Heart right ventricle (tissue), 16 donors: ENCODE measurements at regions of chr10 and their contacts with region 1.

Region 1: GRCh38 chr10:116287906-116288501 is 15.0 kb upstream of the GFRA1 start:
- DNase-seq: peak in 1 of 2 donors; percentile 37
- ATAC-seq: peak in 4 of 8 donors; percentile 25 to 38 (median 32)
- H3K4me3 ChIP-seq: no peak overlapping the region
- H3K27ac ChIP-seq: no peak overlapping the region
- H3K4me1 ChIP-seq: no peaks in the 10 kb centered on the region
- H3K27me3 ChIP-seq: peaks cover 0 to 17% (median 0%) of the 10 kb centered on the region in 7 donors
- CTCF ChIP-seq: peak; percentile 23 to 77 (median 64)

Region 2: GRCh38 chr10:115171392-115171960 is 1116.5 kb before region 1 on chr10:
- intact Hi-C with region 1: loop called in 1 of 10 experiments (anchors 10 kb)
- DNase-seq: no peak
- ATAC-seq: no peak
- H3K4me3 ChIP-seq: no peak overlapping the region
- H3K27ac ChIP-seq: no peak overlapping the region
- H3K4me1 ChIP-seq: no peaks in the 10 kb centered on the region
- H3K27me3 ChIP-seq: no peaks in the 10 kb centered on the region
- CTCF ChIP-seq: peak in 7 of 9 donors; percentile 16 to 53 (median 43)

Region 3: GRCh38 chr10:115706026-115706781 is 581.8 kb before region 1 on chr10:
- intact Hi-C with region 1: loop called in 8 of 10 experiments (anchors 2 to 10 kb)
- DNase-seq: no peak
- ATAC-seq: no peak
- H3K4me3 ChIP-seq: no peak overlapping the region
- H3K27ac ChIP-seq: no peak overlapping the region
- H3K4me1 ChIP-seq: no peaks in the 10 kb centered on the region
- H3K27me3 ChIP-seq: no peaks in the 10 kb centered on the region
- CTCF ChIP-seq: peak in 8 of 9 donors; percentile 7 to 58 (median 47)

Region 4: DNA sequence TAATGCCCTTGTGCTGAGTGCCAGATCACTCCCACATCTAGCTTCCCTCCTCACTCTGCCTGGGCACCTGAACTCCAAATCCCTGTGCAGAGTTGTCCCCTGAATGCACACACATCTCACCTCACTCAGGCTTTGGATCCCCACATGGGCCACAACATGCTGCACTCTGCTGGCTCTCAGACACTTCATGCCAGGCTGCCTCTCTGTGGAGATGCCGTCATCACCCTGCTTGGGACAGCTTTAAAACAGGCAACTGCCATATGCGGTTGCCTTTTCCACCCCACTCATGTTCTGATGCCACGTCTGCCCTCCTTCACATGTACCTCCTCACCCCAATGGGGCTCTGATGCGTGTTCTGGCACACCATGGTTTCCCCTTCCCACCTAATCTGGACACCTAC is 492.0 kb before region 1 on chr10:
- intact Hi-C with region 1: loop called in 9 of 10 experiments (anchors 2 to 10 kb)
- DNase-seq: no peak
- ATAC-seq: no peak
- H3K4me3 ChIP-seq: no peak overlapping the region
- H3K27ac ChIP-seq: no peak overlapping the region
- H3K4me1 ChIP-seq: no peaks in the 10 kb centered on the region
- H3K27me3 ChIP-seq: no peaks in the 10 kb centered on the region
- CTCF ChIP-seq: no peak

Region 5: DNA sequence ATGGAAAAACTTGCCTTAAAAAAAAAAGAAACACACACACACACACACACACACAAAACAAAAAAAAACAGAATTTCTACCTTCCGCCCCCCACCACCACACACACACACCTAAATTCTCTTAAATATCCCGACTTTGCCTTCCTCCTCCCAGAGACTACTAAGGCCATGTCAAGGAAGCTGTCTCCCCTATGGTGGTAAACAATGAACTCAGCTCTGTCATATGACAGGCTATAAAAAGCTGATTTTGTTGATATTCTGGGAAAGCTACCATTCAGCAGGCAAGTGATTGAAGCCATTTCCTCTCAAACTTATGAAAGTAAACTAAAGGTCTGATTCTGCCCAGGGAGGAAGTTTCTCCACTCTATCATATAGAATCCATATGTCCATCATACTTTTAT is 486.0 kb before region 1 on chr10:
- intact Hi-C with region 1: loop called in 9 of 10 experiments (anchors 2 to 10 kb)
- DNase-seq: no peak
- ATAC-seq: no peak
- H3K4me3 ChIP-seq: no peak overlapping the region
- H3K27ac ChIP-seq: no peak overlapping the region
- H3K4me1 ChIP-seq: no peaks in the 10 kb centered on the region
- H3K27me3 ChIP-seq: no peaks in the 10 kb centered on the region
- CTCF ChIP-seq: no peak

Region 6: GRCh38 chr10:115948465-115948864 is 339.5 kb before region 1 on chr10:
- intact Hi-C with region 1: loop called in 3 of 10 experiments (anchors 10 kb)
- DNase-seq: no peak
- ATAC-seq: peak in 2 of 8 donors; percentile 38
- H3K4me3 ChIP-seq: no peak overlapping the region
- H3K27ac ChIP-seq: no peak overlapping the region
- H3K4me1 ChIP-seq: peaks cover 0 to 9% (median 0%) of the 10 kb centered on the region in 9 donors
- H3K27me3 ChIP-seq: no peaks in the 10 kb centered on the region
- CTCF ChIP-seq: peak in 8 of 9 donors; percentile 12 to 57 (median 39)

Region 7: GRCh38 chr10:116397989-116398624 is 110.1 kb after region 1 on chr10:
- intact Hi-C with region 1: no loop called
- DNase-seq: no peak
- ATAC-seq: no peak
- H3K4me3 ChIP-seq: no peak overlapping the region
- H3K27ac ChIP-seq: no peak overlapping the region
- H3K4me1 ChIP-seq: no peaks in the 10 kb centered on the region
- H3K27me3 ChIP-seq: peaks cover 0 to 10% (median 0%) of the 10 kb centered on the region in 7 donors
- CTCF ChIP-seq: no peak